ENCODE measurements at regions of chr6 and their contacts with region 1.

Region 1: GRCh38 chr6:89940225-89941027 is 46.2 kb downstream of the GJA10 start:
- DNase-seq: peak; percentile 47 to 87 (median 65)
- ATAC-seq: peak; percentile 95
- H3K4me3 ChIP-seq: no peak overlapping the region
- H3K4me3 Mint-ChIP-seq: no peak overlapping the region
- H3K27ac ChIP-seq: no peak overlapping the region
- H3K27ac Mint-ChIP-seq: peak overlapping the region; percentile 67
- H3K4me1 ChIP-seq: peaks cover 8% of the 10 kb centered on the region
- H3K4me1 Mint-ChIP-seq: peaks cover 41% of the 10 kb centered on the region
- H3K27me3 ChIP-seq: no peaks in the 10 kb centered on the region
- H3K27me3 Mint-ChIP-seq: no peaks in the 10 kb centered on the region
- CTCF ChIP-seq: peak; percentile 89

Region 2: DNA sequence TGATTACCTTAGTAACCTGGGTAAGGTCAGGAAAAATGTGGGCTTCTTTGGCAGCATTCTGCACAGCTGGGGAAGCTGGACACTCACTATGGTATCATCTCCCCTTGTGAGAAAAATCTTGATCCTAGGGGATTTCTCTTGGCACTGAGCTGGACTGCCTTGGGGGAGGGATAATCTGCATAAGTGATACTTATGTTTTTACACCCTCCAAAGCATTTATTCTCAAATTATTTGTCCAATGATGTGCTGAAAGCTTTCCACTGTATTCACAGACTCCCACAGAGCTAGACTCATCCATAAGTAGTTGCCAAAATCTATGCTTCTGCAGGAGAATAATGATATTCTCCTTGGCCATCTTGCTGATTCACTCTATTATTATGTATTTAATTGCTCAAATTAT is 1652.7 kb before region 1 on chr6:
- CTCF ChIA-PET with region 1: no interaction called
- POLR2A ChIA-PET with region 1: no interaction called
- intact Hi-C with region 1: no loop called
- DNase-seq: no peak
- ATAC-seq: no peak
- H3K4me3 ChIP-seq: no peak overlapping the region
- H3K4me3 Mint-ChIP-seq: no peak overlapping the region
- H3K27ac ChIP-seq: no peak overlapping the region
- H3K27ac Mint-ChIP-seq: no peak overlapping the region
- H3K4me1 ChIP-seq: no peaks in the 10 kb centered on the region
- H3K4me1 Mint-ChIP-seq: no peaks in the 10 kb centered on the region
- H3K27me3 ChIP-seq: peaks cover 0 to 5% of the 10 kb centered on the region in 2 experiments
- H3K27me3 Mint-ChIP-seq: peaks cover 11% of the 10 kb centered on the region
- CTCF ChIP-seq: no peak

Region 3: GRCh38 chr6:88339761-88340160 is 1600.7 kb before region 1 on chr6:
- CTCF ChIA-PET with region 1: no interaction called
- POLR2A ChIA-PET with region 1: no interaction called
- intact Hi-C with region 1: no loop called
- DNase-seq: no peak
- ATAC-seq: no peak
- H3K4me3 ChIP-seq: no peak overlapping the region
- H3K4me3 Mint-ChIP-seq: no peak overlapping the region
- H3K27ac ChIP-seq: no peak overlapping the region
- H3K27ac Mint-ChIP-seq: no peak overlapping the region
- H3K4me1 ChIP-seq: no peaks in the 10 kb centered on the region
- H3K4me1 Mint-ChIP-seq: no peaks in the 10 kb centered on the region
- H3K27me3 ChIP-seq: no peaks in the 10 kb centered on the region
- H3K27me3 Mint-ChIP-seq: no peaks in the 10 kb centered on the region
- CTCF ChIP-seq: no peak

Region 4: GRCh38 chr6:89895276-89895874 is 45.1 kb before region 1 on chr6:
- CTCF ChIA-PET with region 1: no interaction called
- POLR2A ChIA-PET with region 1: no interaction called
- intact Hi-C with region 1: no loop called
- DNase-seq: no peak
- ATAC-seq: no peak
- H3K4me3 ChIP-seq: no peak overlapping the region
- H3K4me3 Mint-ChIP-seq: no peak overlapping the region
- H3K27ac ChIP-seq: no peak overlapping the region
- H3K27ac Mint-ChIP-seq: no peak overlapping the region
- H3K4me1 ChIP-seq: no peaks in the 10 kb centered on the region
- H3K4me1 Mint-ChIP-seq: no peaks in the 10 kb centered on the region
- H3K27me3 ChIP-seq: peaks cover 14 to 23% of the 10 kb centered on the region in 2 experiments
- H3K27me3 Mint-ChIP-seq: peaks cover 69% of the 10 kb centered on the region
- CTCF ChIP-seq: no peak

Region 5: DNA sequence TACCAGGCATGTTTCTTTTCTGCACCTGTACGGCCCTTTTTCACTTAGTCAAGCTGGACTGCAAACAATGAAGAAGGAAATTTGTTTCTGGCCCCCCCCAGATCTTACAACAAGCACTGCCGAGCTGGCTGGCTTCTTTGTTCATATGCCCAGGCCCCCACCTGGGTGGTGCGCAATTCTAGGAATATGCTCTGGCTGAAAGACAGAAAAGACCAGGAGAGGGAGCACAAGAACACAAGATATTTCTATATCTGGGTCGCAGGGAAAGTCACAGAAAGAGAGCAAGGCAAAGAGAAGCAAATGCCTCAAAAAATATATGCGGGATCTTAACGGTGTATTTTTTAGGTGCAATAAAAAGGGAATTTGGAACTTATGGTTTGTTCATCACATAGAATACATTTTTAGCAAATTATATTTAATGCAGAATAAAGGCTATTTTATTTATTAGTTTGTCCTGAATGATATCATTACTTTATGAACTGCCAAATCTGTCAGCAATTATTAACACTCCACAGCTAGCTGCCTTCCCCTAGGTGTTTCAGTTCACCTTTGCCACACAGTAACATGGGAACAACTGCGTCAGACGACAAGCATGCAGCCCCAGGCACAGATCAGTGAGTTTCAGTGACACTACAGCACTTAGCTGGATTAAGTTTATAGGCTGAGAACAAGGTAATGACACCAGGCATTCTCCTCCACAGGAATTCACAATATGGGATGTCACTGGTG is 30.3 kb after region 1 on chr6:
- CTCF ChIA-PET with region 1: interaction called, 3 read pairs
- POLR2A ChIA-PET with region 1: no interaction called
- intact Hi-C with region 1: loop called in 1 of 2 experiments (anchors 1 kb)
- DNase-seq: peak in 5 of 14 experiments; percentile 13 to 65 (median 58)
- ATAC-seq: peak; percentile 77
- H3K4me3 ChIP-seq: no peak overlapping the region
- H3K4me3 Mint-ChIP-seq: no peak overlapping the region
- H3K27ac ChIP-seq: no peak overlapping the region
- H3K27ac Mint-ChIP-seq: no peak overlapping the region
- H3K4me1 ChIP-seq: peaks cover 5% of the 10 kb centered on the region
- H3K4me1 Mint-ChIP-seq: peaks cover 44% of the 10 kb centered on the region
- H3K27me3 ChIP-seq: no peaks in the 10 kb centered on the region
- H3K27me3 Mint-ChIP-seq: no peaks in the 10 kb centered on the region
- CTCF ChIP-seq: peak; percentile 49

Region 6: GRCh38 chr6:90107771-90108282 is 167.4 kb after region 1 on chr6:
- CTCF ChIA-PET with region 1: interaction called, 8 read pairs
- POLR2A ChIA-PET with region 1: interaction called, 3 read pairs
- intact Hi-C with region 1: loop called (anchors 5 kb)
- DNase-seq: peak in 4 of 14 experiments; percentile 36 to 43 (median 40)
- ATAC-seq: peak; percentile 60
- H3K4me3 ChIP-seq: no peak overlapping the region
- H3K4me3 Mint-ChIP-seq: peak overlapping the region; percentile 27
- H3K27ac ChIP-seq: no peak overlapping the region
- H3K27ac Mint-ChIP-seq: peak overlapping the region; percentile 70
- H3K4me1 ChIP-seq: peaks cover 54% of the 10 kb centered on the region
- H3K4me1 Mint-ChIP-seq: peaks cover 93% of the 10 kb centered on the region
- H3K27me3 ChIP-seq: no peaks in the 10 kb centered on the region
- H3K27me3 Mint-ChIP-seq: no peaks in the 10 kb centered on the region
- CTCF ChIP-seq: no peak

Region 7: DNA sequence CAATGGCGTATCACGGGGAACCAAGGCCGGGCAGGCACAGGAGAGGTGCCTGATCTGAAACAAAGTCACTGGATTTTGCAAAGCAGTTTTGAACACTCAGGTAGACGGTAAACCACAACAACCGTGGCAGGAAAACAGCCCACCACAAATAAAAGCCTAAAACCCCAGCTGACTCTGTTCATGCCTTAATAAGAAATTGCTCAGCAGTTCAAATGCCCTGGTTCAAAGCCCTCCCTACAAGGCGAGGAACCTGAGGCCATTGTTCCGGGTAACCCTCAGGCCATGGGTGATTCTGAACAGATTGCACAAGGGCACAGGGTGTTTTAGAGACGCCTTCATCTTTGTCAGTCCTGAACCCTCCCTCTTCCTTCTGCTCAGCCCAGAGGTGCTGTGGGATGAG is 532.3 kb after region 1 on chr6:
- CTCF ChIA-PET with region 1: interaction called, 37 read pairs
- POLR2A ChIA-PET with region 1: interaction called, 9 read pairs
- intact Hi-C with region 1: no loop called
- DNase-seq: peak in 4 of 14 experiments; percentile 40 to 56 (median 49)
- ATAC-seq: peak; percentile 35
- H3K4me3 ChIP-seq: peak overlapping the region; percentile 21
- H3K4me3 Mint-ChIP-seq: peak overlapping the region; percentile 14
- H3K27ac ChIP-seq: no peak overlapping the region
- H3K27ac Mint-ChIP-seq: no peak overlapping the region
- H3K4me1 ChIP-seq: peaks cover 38% of the 10 kb centered on the region
- H3K4me1 Mint-ChIP-seq: peaks cover 52% of the 10 kb centered on the region
- H3K27me3 ChIP-seq: no peaks in the 10 kb centered on the region
- H3K27me3 Mint-ChIP-seq: no peaks in the 10 kb centered on the region
- CTCF ChIP-seq: no peak